ENCODE measurements at regions of chr9 and their contacts with region 1.

Region 1: GRCh38 chr9:96327694-96328352 is 25.8 kb upstream of the HSD17B3 start:
- DNase-seq: no peak
- H3K4me3 ChIP-seq: no peak overlapping the region
- H3K27ac ChIP-seq: no peak overlapping the region
- H3K4me1 ChIP-seq: no peaks in the 10 kb centered on the region
- H3K27me3 ChIP-seq: no peaks in the 10 kb centered on the region
- CTCF ChIP-seq: peak; percentile 72 to 97 (median 92)
- EP300 ChIP-seq: no peak
- POLR2A ChIP-seq: no peak

Region 2: DNA sequence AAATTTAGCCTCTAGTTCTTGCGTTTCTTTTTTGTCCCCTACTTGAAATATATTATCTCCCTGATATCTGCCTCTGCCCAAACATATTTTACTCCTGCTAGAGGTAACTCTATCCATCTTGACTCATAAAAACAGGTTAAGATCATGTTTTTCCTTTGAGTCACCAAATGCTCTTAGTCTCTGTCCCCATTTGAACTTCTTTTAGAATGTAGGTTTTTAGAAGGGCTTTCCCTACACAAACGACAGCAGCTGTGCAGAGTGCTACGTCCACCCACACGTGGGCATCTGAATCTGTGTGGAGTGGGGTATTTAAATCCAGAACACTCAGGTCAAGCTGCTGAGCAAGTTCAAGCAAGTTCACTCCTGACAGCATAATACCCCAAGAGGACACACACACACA is 28.0 kb before region 1 on chr9:
- intact Hi-C with region 1: no loop called
- DNase-seq: no peak
- H3K4me3 ChIP-seq: no peak overlapping the region
- H3K27ac ChIP-seq: no peak overlapping the region
- H3K4me1 ChIP-seq: no peaks in the 10 kb centered on the region
- H3K27me3 ChIP-seq: no peaks in the 10 kb centered on the region
- CTCF ChIP-seq: no peak
- EP300 ChIP-seq: no peak
- POLR2A ChIP-seq: no peak

Region 3: GRCh38 chr9:96667361-96667728 is 339.5 kb after region 1 on chr9:
- intact Hi-C with region 1: loop called (anchors 2 kb)
- DNase-seq: no peak
- H3K4me3 ChIP-seq: no peak overlapping the region
- H3K27ac ChIP-seq: no peak overlapping the region
- H3K4me1 ChIP-seq: peaks cover 0 to 5% (median 2%) of the 10 kb centered on the region in 4 donors
- H3K27me3 ChIP-seq: no peaks in the 10 kb centered on the region
- CTCF ChIP-seq: no peak
- EP300 ChIP-seq: no peak
- POLR2A ChIP-seq: no peak

Measured in esophagus muscularis mucosa (tissue), 4 donors.